ENCODE measurements at regions of chr14 and their contacts with region 1.

Region 1: DNA sequence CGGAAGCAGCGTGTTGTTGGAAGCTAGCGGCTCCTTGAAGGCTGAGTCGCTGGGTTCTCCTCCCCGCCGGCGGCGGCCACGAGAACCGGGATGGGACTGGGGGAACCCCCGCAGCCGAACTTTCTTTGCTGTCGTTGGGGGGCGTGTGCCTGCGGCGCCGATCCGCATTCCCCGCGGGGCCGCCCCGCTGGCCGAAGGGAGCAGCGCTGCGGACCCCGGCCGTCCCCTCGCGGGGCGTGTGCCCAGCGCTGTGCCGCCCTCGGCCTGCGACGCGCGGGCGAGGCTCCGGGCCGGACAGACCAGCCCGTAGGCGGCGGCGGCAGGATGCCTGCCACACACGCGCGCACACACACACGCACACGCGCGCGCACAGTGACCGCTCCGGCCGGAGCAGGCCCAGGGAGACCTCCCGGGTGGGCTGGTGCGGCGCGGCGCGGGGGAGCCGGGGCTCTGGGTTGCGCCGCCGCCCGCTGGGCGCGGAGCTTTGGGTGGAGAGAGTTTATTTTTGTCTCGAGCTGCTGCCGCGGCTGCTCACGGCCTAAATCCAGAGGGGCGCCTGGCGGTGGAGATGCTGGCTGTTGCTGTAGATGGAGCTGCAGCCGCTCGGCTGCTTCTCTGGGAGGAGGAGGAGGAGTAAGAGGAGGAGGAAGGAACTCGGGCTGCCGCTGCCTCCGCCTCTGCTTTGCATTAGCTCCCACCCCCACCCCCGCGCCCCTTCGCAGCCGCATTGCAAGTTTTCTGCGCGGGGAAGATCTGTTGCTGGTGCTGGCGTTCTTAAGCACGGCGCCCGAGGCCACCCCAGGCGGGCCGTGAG is at the start of gene SAMD4A:
- DNase-seq: peak; percentile 86
- H3K4me3 Mint-ChIP-seq: peak within 1 kb of the TSS; percentile 87
- H3K27ac Mint-ChIP-seq: peak within 1 kb of the TSS; percentile 83
- H3K4me1 Mint-ChIP-seq: peaks cover 14% of the 10 kb centered on the region
- H3K27me3 Mint-ChIP-seq: no peaks in the 10 kb centered on the region
- CTCF ChIP-seq: peak; percentile 35
- total RNA-seq, gene SAMD4A: 60.6 and 63.5 TPM in 2 replicates

Region 2: GRCh38 chr14:54593860-54594259 is 27.2 kb after region 1 on chr14:
- CTCF ChIA-PET with region 1: interaction called, 4 read pairs
- POLR2A ChIA-PET with region 1: interaction called, 17 read pairs
- intact Hi-C with region 1: no loop called
- DNase-seq: peak; percentile 42
- H3K4me3 Mint-ChIP-seq: no peak overlapping the region
- H3K27ac Mint-ChIP-seq: peak overlapping the region; percentile 33
- H3K4me1 Mint-ChIP-seq: peaks cover 54% of the 10 kb centered on the region
- H3K27me3 Mint-ChIP-seq: no peaks in the 10 kb centered on the region
- CTCF ChIP-seq: no peak

Region 3: DNA sequence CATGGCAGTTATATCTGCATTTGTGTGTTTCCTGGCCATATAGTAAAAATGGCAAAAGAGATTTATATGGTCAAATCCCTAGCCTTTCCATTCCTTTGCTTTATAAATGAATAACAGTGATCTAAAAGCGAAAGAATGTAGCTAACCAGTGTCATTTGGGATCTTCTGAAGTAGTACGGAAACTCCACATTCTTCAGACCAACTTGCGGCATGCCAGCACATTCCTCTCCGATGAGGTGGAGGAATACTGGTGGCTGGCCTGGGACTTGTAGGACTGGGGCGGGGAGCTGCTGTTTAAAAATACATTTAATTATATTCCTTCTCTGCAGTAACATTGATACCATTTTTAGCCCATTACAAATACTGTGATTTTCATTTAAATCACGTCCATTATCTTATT is 85.6 kb after region 1 on chr14:
- CTCF ChIA-PET with region 1: interaction called, 7 read pairs
- POLR2A ChIA-PET with region 1: interaction called, 18 read pairs
- intact Hi-C with region 1: loop called (anchors 5 kb)
- DNase-seq: peak; percentile 90
- H3K4me3 Mint-ChIP-seq: peak overlapping the region; percentile 63
- H3K27ac Mint-ChIP-seq: peak overlapping the region; percentile 80
- H3K4me1 Mint-ChIP-seq: peaks cover 40% of the 10 kb centered on the region
- H3K27me3 Mint-ChIP-seq: no peaks in the 10 kb centered on the region
- CTCF ChIP-seq: no peak

Region 4: GRCh38 chr14:54676812-54677708 is 110.4 kb after region 1 on chr14:
- CTCF ChIA-PET with region 1: interaction called, 5 read pairs
- POLR2A ChIA-PET with region 1: interaction called, 17 read pairs
- intact Hi-C with region 1: no loop called
- DNase-seq: peak; percentile 92
- H3K4me3 Mint-ChIP-seq: peak overlapping the region; percentile 14
- H3K27ac Mint-ChIP-seq: peak overlapping the region; percentile 86
- H3K4me1 Mint-ChIP-seq: peaks cover 31% of the 10 kb centered on the region
- H3K27me3 Mint-ChIP-seq: no peaks in the 10 kb centered on the region
- CTCF ChIP-seq: no peak

Region 5: DNA sequence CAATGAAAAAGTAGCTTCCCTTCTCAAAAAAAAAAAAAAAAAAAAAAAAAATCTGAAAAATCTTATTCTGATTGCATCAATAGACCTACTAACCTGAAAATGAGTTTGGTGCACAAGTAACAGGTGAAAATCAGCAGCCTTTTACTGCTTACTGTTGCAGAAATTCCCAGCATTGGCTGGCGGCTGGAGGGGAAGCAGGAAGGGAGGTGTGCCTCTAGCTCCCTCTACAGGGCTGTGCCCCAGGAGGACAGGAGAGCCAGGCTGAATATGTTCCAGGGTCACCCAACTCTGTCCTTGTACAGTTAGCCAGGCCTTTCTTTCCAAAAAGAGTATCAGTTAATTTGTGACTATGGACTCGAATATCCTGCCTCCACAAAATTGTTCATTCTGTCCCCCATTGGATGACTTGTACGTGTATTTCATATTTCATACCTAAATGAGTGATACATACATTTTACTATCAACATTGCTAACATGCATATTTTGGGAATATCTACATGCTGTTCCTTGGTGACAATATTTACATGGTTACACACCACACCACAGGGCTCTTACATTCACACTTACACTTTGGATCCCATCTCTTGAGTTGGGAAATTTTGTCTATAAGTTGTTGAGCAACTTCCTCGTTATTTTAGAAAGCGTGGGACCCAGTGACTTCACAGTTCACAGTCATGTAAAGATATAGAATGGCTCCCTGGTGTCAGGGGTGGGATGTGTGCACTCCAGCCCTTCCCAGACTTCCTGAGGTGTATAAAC is 125.1 kb after region 1 on chr14:
- CTCF ChIA-PET with region 1: interaction called, 97 read pairs
- POLR2A ChIA-PET with region 1: interaction called, 95 read pairs
- intact Hi-C with region 1: loop called (anchors 1 kb)
- DNase-seq: peak; percentile 79
- H3K4me3 Mint-ChIP-seq: no peak overlapping the region
- H3K27ac Mint-ChIP-seq: no peak overlapping the region
- H3K4me1 Mint-ChIP-seq: peaks cover 27% of the 10 kb centered on the region
- H3K27me3 Mint-ChIP-seq: no peaks in the 10 kb centered on the region
- CTCF ChIP-seq: peak; percentile 82

Region 6: GRCh38 chr14:54805521-54806322 is 239.1 kb after region 1 on chr14:
- CTCF ChIA-PET with region 1: interaction called, 23 read pairs
- POLR2A ChIA-PET with region 1: interaction called, 4 read pairs
- intact Hi-C with region 1: loop called (anchors 1 kb)
- DNase-seq: peak; percentile 86
- H3K4me3 Mint-ChIP-seq: no peak overlapping the region
- H3K27ac Mint-ChIP-seq: no peak overlapping the region
- H3K4me1 Mint-ChIP-seq: peaks cover 12% of the 10 kb centered on the region
- H3K27me3 Mint-ChIP-seq: peaks cover under 1% of the 10 kb centered on the region
- CTCF ChIP-seq: peak; percentile 91

Region 7: DNA sequence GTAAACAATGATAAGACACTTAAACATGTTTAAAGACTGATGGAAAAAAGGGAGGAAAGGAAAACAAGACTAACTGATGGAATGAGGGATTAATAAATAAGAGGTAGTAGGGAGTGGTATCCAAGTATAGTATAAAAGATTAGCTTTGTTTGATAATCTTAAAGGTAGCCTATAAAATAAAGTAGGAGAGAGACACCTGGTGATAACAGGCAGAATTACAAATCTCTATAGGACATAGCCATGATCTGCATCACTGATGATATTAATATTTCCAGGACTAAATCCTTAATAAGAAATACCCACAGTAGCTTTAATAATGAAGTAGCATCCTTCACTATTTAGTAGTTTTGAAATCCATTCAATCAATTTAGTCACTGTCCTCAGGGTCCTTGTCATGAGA is 594.4 kb after region 1 on chr14:
- CTCF ChIA-PET with region 1: interaction called, 3 read pairs
- POLR2A ChIA-PET with region 1: no interaction called
- intact Hi-C with region 1: loop called (anchors 10 kb)
- DNase-seq: peak; percentile 37
- H3K4me3 Mint-ChIP-seq: no peak overlapping the region
- H3K27ac Mint-ChIP-seq: peak overlapping the region; percentile 14
- H3K4me1 Mint-ChIP-seq: peaks cover 6% of the 10 kb centered on the region
- H3K27me3 Mint-ChIP-seq: no peaks in the 10 kb centered on the region
- CTCF ChIP-seq: peak; percentile 46

Region 8: DNA sequence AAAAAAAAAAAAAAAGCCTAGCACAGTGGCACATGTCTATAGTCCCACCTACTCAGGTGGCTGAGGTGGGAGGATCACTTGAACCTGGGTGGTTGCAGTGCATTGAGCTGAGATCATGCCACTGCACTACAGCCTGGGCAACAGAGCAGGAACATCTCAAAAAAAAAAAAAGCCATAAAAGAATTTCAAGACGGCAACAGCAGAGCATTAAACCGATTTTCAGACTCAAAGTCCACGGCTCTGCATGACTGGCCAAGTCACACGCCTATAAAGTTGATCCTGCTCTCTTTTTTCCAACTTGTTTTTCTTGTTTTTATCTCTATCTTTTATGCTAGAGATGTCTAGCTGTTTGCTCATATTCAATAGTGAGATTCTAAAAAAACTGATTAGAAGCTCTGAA is 750.0 kb after region 1 on chr14:
- CTCF ChIA-PET with region 1: no interaction called
- POLR2A ChIA-PET with region 1: no interaction called
- intact Hi-C with region 1: no loop called
- DNase-seq: no peak
- H3K4me3 Mint-ChIP-seq: no peak overlapping the region
- H3K27ac Mint-ChIP-seq: no peak overlapping the region
- H3K4me1 Mint-ChIP-seq: no peaks in the 10 kb centered on the region
- H3K27me3 Mint-ChIP-seq: no peaks in the 10 kb centered on the region
- CTCF ChIP-seq: no peak

Measured in MCF 10A (cell line).